ENCODE measurements at regions of chr1 and their contacts with region 1.

Region 1: GRCh38 chr1:167270349-167271092 is 49.8 kb downstream of the POU2F1 start:
- DNase-seq: no peak
- H3K4me3 ChIP-seq: no peak overlapping the region
- H3K4me3 Mint-ChIP-seq: no peak overlapping the region
- H3K27ac ChIP-seq: no peak overlapping the region
- H3K27ac Mint-ChIP-seq: peak overlapping the region in 1 of 7 donors; percentile 7
- H3K4me1 ChIP-seq: peaks cover 5% of the 10 kb centered on the region
- H3K4me1 Mint-ChIP-seq: peaks cover 10 to 33% (median 13%) of the 10 kb centered on the region in 4 donors
- H3K27me3 ChIP-seq: no peaks in the 10 kb centered on the region
- H3K27me3 Mint-ChIP-seq: no peaks in the 10 kb centered on the region

Region 2: GRCh38 chr1:167229719-167230385 is 40.7 kb before region 1 on chr1:
- CTCF ChIA-PET with region 1: interaction called, 13 read pairs
- POLR2A ChIA-PET with region 1: no interaction called
- intact Hi-C with region 1: loop called (anchors 2 kb)
- DNase-seq: no peak
- H3K4me3 ChIP-seq: no peak overlapping the region
- H3K4me3 Mint-ChIP-seq: no peak overlapping the region
- H3K27ac ChIP-seq: no peak overlapping the region
- H3K27ac Mint-ChIP-seq: no peak overlapping the region
- H3K4me1 ChIP-seq: peaks cover 15% of the 10 kb centered on the region
- H3K4me1 Mint-ChIP-seq: peaks cover 33 to 65% (median 47%) of the 10 kb centered on the region in 4 donors
- H3K27me3 ChIP-seq: no peaks in the 10 kb centered on the region
- H3K27me3 Mint-ChIP-seq: no peaks in the 10 kb centered on the region

Region 3: DNA sequence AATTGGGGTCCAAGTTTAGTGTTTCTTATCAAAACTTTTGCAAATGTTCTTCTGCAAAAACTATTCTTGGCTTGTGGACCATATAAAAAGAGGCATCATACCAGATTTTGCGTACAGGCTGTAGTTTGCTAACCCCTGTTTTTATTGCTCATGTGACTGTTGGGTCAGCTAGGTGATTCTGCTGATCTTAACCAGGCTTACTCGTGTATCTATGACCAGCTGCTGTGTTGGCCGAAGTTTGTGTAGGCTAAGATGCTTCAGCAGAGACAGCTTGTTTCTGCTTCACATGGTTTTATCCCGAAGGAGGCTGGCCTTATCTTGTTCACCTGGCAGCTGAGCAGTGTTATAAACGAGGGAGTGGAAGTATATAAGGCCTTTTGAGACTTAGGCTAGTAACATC is 11.7 kb before region 1 on chr1:
- CTCF ChIA-PET with region 1: interaction called, 14 read pairs
- POLR2A ChIA-PET with region 1: no interaction called
- intact Hi-C with region 1: no loop called
- DNase-seq: no peak
- H3K4me3 ChIP-seq: no peak overlapping the region
- H3K4me3 Mint-ChIP-seq: no peak overlapping the region
- H3K27ac ChIP-seq: no peak overlapping the region
- H3K27ac Mint-ChIP-seq: peak overlapping the region in 1 of 7 donors; percentile 27
- H3K4me1 ChIP-seq: peaks cover 27% of the 10 kb centered on the region
- H3K4me1 Mint-ChIP-seq: peaks cover 21 to 34% (median 26%) of the 10 kb centered on the region in 4 donors
- H3K27me3 ChIP-seq: no peaks in the 10 kb centered on the region
- H3K27me3 Mint-ChIP-seq: no peaks in the 10 kb centered on the region

Region 4: GRCh38 chr1:167401260-167401873 is 130.8 kb after region 1 on chr1:
- CTCF ChIA-PET with region 1: interaction called, 12 read pairs
- POLR2A ChIA-PET with region 1: no interaction called
- intact Hi-C with region 1: loop called (anchors 5 kb)
- DNase-seq: peak in 4 of 5 donors; percentile 37 to 47 (median 41)
- H3K4me3 ChIP-seq: no peak overlapping the region
- H3K4me3 Mint-ChIP-seq: no peak overlapping the region
- H3K27ac ChIP-seq: no peak overlapping the region
- H3K27ac Mint-ChIP-seq: no peak overlapping the region
- H3K4me1 ChIP-seq: no peaks in the 10 kb centered on the region
- H3K4me1 Mint-ChIP-seq: peaks cover 0 to 3% (median under 1%) of the 10 kb centered on the region in 4 donors
- H3K27me3 ChIP-seq: no peaks in the 10 kb centered on the region
- H3K27me3 Mint-ChIP-seq: no peaks in the 10 kb centered on the region